WTC11 (cell line): ENCODE measurements at regions of chr22 and their contacts with region 1.

Region 1: GRCh38 chr22:23128269-23129108 is 13.3 kb downstream of the RSPH14 start:
- DNase-seq: peak; percentile 89
- ATAC-seq: peak; percentile 91
- H3K4me3 Mint-ChIP-seq: no peak overlapping the region
- H3K27ac Mint-ChIP-seq: no peak overlapping the region
- H3K4me1 Mint-ChIP-seq: peaks cover 5% of the 10 kb centered on the region; the same call in 1 of the 2 replicates
- H3K27me3 Mint-ChIP-seq: peaks cover 7% of the 10 kb centered on the region
- CTCF ChIP-seq: peak; percentile 69

Region 2: GRCh38 chr22:22870577-22871404 is 257.7 kb before region 1 on chr22:
- CTCF ChIA-PET with region 1: interaction called, 10 read pairs
- POLR2A ChIA-PET with region 1: no interaction called
- DNase-seq: no peak
- ATAC-seq: peak; percentile 89
- H3K4me3 Mint-ChIP-seq: no peak overlapping the region
- H3K27ac Mint-ChIP-seq: no peak overlapping the region
- H3K4me1 Mint-ChIP-seq: no peaks in the 10 kb centered on the region
- H3K27me3 Mint-ChIP-seq: peaks cover 89% of the 10 kb centered on the region
- CTCF ChIP-seq: peak; percentile 12; the same call in 1 of the 2 replicates

Region 3: DNA sequence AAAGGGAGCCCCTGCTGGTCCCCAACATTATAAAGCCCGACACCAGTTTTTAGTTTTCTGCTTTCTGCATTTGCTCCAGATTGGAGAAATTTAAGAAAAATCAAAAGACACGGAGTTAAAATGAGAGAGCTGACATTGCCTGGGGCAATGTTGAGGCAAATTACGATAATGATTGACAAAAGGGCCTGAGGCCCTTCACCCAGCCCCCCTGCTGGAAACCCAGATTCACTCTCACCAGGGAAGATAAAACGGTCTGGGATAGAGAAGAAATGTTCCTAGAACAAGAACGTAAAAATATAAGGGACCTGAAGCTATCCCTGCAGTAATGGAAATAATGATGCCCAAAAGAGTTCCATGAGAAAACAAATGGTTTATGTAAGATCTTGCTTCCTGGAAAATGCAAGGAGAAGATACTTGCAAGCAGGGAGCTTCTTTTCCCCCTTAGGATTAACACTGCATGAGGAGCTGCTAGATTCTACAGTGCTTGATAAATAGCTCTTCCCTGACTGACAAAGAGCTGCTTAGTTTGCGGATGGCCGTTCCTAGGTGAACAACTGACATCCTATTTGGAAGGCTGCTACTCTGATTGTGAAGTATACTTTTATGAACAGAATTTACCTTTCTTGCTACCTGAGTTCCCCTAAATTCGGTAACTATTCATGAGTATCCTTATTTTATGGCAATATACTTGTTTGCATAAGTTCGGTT is 98.8 kb before region 1 on chr22:
- CTCF ChIA-PET with region 1: no interaction called
- POLR2A ChIA-PET with region 1: no interaction called
- DNase-seq: no peak
- ATAC-seq: peak; percentile 43; the same call in 1 of the 2 replicates
- H3K4me3 Mint-ChIP-seq: no peak overlapping the region
- H3K27ac Mint-ChIP-seq: no peak overlapping the region
- H3K4me1 Mint-ChIP-seq: peaks cover 45% of the 10 kb centered on the region
- H3K27me3 Mint-ChIP-seq: peaks cover 4% of the 10 kb centered on the region; the same call in 1 of the 2 replicates
- CTCF ChIP-seq: no peak

Region 4: GRCh38 chr22:23069502-23070357 is 58.8 kb before region 1 on chr22:
- CTCF ChIA-PET with region 1: interaction called, 12 read pairs
- POLR2A ChIA-PET with region 1: no interaction called
- DNase-seq: peak; percentile 93
- ATAC-seq: peak; percentile 95
- H3K4me3 Mint-ChIP-seq: peak overlapping the region; percentile 84
- H3K27ac Mint-ChIP-seq: no peak overlapping the region
- H3K4me1 Mint-ChIP-seq: peaks cover 17% of the 10 kb centered on the region
- H3K27me3 Mint-ChIP-seq: peaks cover 46% of the 10 kb centered on the region
- CTCF ChIP-seq: no peak